ENCODE measurements at regions of chr18 and their contacts with region 1.

Region 1: GRCh38 chr18:63518178-63519012 is 23.8 kb upstream of the SERPINB12 start:
- DNase-seq: no peak
- ATAC-seq: peak; percentile 60
- H3K4me3 Mint-ChIP-seq: no peak overlapping the region
- H3K27ac Mint-ChIP-seq: no peak overlapping the region
- H3K4me1 Mint-ChIP-seq: peaks cover 3% of the 10 kb centered on the region
- H3K27me3 Mint-ChIP-seq: peaks cover 9% of the 10 kb centered on the region
- CTCF ChIP-seq: no peak

Region 2: GRCh38 chr18:63267975-63268721 is 250.2 kb before region 1 on chr18:
- CTCF ChIA-PET with region 1: no interaction called
- POLR2A ChIA-PET with region 1: no interaction called
- intact Hi-C with region 1: no loop called
- DNase-seq: no peak
- ATAC-seq: no peak
- H3K4me3 Mint-ChIP-seq: no peak overlapping the region
- H3K27ac Mint-ChIP-seq: peak overlapping the region; percentile 10
- H3K4me1 Mint-ChIP-seq: peaks cover 54% of the 10 kb centered on the region
- H3K27me3 Mint-ChIP-seq: no peaks in the 10 kb centered on the region
- CTCF ChIP-seq: no peak

Region 3: DNA sequence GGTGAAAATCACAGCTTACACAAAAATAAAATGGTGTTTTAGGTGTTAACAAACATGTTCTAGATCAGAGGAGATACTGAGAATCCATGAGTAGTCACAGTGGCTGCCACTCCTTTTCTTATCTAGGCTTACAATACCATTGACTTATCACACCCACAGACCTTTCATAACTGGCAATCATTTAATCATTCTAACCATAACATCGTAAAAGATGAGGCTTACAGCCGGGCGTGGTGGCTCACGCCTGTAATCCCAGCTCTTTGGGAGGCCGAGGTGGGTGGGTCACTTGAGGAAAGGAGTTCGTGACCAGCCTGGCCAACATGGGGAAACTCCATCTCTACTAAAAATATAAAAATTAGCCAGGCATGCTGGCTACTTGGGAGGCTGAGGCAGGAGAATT is 60.4 kb before region 1 on chr18:
- CTCF ChIA-PET with region 1: no interaction called
- POLR2A ChIA-PET with region 1: no interaction called
- intact Hi-C with region 1: no loop called
- DNase-seq: no peak
- ATAC-seq: no peak
- H3K4me3 Mint-ChIP-seq: no peak overlapping the region
- H3K27ac Mint-ChIP-seq: no peak overlapping the region
- H3K4me1 Mint-ChIP-seq: no peaks in the 10 kb centered on the region
- H3K27me3 Mint-ChIP-seq: peaks cover 8% of the 10 kb centered on the region
- CTCF ChIP-seq: no peak

Region 4: DNA sequence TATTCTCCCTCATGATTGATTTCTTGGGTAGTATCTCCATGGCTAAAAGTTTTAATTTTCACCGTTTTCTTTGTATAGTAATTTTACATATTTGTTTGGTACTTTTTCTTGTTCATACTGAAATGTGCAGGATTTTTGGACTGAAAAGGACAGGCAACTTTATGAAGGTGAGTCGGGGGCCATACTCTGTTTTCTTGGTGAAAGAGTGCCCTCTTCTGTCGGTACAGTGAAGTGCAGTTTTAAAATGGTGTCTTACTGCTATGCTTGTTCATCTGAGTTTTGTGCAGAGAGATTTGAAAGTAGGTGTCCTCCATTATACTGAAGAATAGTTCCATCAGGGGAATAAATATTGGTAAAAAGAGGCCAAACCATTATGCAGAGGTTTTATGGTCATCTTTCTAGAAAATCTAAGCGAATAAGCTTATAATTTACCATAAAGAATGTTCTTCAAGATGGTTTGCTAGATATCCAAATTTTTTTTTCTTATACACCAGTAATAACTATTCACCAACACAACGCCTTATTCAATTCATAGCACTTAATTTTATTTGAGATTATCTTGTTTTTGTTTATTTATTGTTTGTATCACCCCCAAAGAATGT is 60.1 kb after region 1 on chr18:
- CTCF ChIA-PET with region 1: interaction called, 13 read pairs
- POLR2A ChIA-PET with region 1: no interaction called
- intact Hi-C with region 1: loop called (anchors 1 kb)
- DNase-seq: no peak
- ATAC-seq: no peak
- H3K4me3 Mint-ChIP-seq: no peak overlapping the region
- H3K27ac Mint-ChIP-seq: no peak overlapping the region
- H3K4me1 Mint-ChIP-seq: no peaks in the 10 kb centered on the region
- H3K27me3 Mint-ChIP-seq: peaks cover 2% of the 10 kb centered on the region
- CTCF ChIP-seq: no peak

Region 5: DNA sequence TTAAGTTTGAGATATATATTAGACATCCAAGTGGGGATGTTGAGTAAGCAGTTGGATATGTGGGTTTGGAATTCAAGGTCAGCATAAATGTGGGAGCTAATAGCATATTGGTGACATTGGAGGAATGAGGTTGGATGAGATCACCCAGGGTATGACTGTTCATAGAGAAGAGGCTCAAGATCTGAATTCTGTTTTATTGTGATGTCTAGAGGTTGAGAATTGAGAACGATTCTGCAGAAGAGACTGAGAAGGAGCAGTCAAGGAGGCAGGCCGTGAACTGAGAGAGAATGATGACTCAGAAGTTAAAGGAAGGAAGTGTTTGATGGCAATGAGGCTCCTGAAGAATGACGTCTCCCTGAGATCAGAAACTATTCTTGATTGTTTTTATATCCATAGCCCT is 190.3 kb after region 1 on chr18:
- CTCF ChIA-PET with region 1: no interaction called
- POLR2A ChIA-PET with region 1: no interaction called
- intact Hi-C with region 1: no loop called
- DNase-seq: no peak
- ATAC-seq: no peak
- H3K4me3 Mint-ChIP-seq: no peak overlapping the region
- H3K27ac Mint-ChIP-seq: no peak overlapping the region
- H3K4me1 Mint-ChIP-seq: no peaks in the 10 kb centered on the region
- H3K27me3 Mint-ChIP-seq: no peaks in the 10 kb centered on the region
- CTCF ChIP-seq: no peak

Region 6: DNA sequence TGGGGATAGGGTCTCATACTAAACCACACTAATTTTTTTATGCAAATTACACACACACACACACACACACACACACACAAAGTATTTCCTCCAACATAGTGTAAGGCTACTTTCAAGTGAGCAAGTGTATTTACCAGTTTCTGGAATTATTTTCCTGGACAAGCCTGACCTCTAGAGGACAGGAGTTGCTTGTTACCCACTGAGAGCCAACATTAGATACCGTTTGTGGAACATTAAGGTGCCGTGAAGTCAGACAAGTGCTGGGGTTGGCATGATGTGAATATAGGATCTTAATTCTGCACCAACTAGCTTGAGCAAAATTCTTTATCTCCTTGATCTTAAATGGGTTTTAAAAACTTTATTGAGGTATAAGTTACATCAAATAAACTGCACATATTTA is 329.8 kb after region 1 on chr18:
- CTCF ChIA-PET with region 1: interaction called, 12 read pairs
- POLR2A ChIA-PET with region 1: no interaction called
- intact Hi-C with region 1: loop called (anchors 1 kb)
- DNase-seq: no peak
- ATAC-seq: no peak
- H3K4me3 Mint-ChIP-seq: no peak overlapping the region
- H3K27ac Mint-ChIP-seq: no peak overlapping the region
- H3K4me1 Mint-ChIP-seq: no peaks in the 10 kb centered on the region
- H3K27me3 Mint-ChIP-seq: peaks cover 16% of the 10 kb centered on the region
- CTCF ChIP-seq: no peak

Region 7: DNA sequence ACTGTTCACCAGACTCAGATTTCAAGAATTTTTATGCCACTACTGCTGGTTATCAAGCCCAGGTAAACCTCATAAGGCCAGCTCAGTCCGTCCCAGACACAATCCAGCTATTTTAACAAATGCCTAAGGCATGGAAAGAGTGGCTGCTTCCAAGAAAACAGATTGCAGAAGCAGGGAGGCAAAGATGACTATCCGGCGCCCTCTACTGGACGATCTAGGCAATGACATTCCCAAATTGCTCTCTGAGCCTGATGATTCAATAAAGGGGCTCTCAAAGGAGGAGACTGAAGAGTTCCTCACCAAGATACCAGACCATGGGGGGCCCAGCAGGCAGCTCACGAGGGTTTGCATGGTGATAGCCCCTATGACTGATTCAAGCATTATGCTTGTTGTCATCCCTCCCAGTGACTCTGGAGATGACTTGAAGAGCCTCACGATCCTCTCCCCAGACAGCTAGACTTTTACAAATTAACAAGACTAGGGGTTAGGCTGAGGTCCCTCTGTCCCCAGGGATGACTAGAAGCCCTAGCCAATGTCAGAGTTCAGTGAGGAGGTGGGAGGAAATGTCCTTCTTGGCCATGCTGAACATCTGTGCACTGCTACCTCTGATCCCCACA is 476.5 kb after region 1 on chr18:
- CTCF ChIA-PET with region 1: interaction called, 26 read pairs
- POLR2A ChIA-PET with region 1: no interaction called
- intact Hi-C with region 1: loop called (anchors 1 kb)
- DNase-seq: no peak
- ATAC-seq: peak; percentile 37
- H3K4me3 Mint-ChIP-seq: no peak overlapping the region
- H3K27ac Mint-ChIP-seq: no peak overlapping the region
- H3K4me1 Mint-ChIP-seq: no peaks in the 10 kb centered on the region
- H3K27me3 Mint-ChIP-seq: no peaks in the 10 kb centered on the region
- CTCF ChIP-seq: peak; percentile 19

Measured in activated B cell treated with CpG ODN at 0.5 μM for 24 hours (primary cell).